ACHN (cell line): ENCODE measurements at regions of chr6 and their contacts with region 1.

Region 1: DNA sequence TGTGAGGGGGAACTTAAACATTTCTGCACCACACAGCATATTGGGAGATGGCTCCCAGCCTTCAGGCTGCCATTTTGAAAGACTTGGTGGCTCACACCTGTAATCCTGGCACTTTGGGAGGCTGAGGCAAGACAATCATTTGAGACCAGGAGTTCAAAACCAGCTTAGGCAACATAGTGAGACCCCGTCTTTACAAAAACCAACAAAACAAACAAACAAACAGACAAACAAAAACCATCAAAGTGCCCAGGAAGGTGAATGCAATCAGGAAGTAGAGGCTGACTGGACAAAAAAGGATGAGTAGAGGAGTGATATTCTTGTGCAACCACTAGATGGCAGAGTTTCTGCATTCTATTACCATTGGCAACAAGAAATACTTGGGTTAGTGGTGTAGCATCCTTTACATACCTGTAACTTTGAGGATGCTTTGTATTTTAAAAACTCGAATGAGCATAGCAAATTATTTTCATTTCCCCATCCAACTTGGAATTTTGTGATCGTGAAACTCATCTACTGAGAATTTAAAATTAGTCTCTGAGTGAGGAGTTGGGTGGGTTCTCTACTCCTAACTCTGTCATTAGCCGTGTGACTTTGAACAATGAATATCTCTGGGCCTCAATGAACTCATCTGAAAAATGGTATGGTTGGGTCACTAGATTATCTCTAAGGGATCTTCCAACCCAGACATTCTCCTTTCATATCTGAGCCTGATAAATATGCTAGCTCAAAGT is 84.4 kb downstream of the CRYBG1 start:
- DNase-seq: peak; percentile 72

Region 2: GRCh38 chr6:106125925-106126435 is 319.0 kb before region 1 on chr6:
- in situ Hi-C with region 1: no loop called
- DNase-seq: no peak

Region 3: DNA sequence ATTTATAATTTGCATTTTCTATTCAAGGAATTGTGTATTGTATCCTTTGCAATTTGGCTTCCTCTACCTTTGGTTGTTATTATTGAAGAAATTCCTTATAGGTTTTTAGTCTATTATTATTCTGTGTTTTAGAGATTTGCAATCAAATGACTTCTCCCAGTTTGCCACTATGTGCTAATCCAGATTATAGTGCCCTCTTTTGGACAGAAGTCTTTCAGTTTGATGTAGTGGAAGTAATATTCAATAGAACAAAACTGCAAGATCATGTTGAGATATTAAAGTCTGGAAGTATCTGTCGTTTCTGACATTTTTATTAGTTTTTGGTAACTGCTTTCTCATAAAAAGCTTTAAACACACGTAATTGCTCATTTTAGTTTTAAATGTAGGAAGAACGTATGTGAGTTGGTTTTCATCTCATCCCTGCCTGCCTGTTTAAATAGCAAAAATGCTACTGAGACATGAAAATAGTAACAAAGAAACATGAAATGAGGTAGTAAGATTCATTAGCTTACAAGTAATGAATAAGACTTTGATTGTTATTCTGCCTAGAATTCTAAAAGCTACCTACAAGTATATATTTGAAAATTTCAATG is 111.5 kb after region 1 on chr6:
- in situ Hi-C with region 1: loop called (anchors 25 kb)
- DNase-seq: peak; percentile 38

Region 4: DNA sequence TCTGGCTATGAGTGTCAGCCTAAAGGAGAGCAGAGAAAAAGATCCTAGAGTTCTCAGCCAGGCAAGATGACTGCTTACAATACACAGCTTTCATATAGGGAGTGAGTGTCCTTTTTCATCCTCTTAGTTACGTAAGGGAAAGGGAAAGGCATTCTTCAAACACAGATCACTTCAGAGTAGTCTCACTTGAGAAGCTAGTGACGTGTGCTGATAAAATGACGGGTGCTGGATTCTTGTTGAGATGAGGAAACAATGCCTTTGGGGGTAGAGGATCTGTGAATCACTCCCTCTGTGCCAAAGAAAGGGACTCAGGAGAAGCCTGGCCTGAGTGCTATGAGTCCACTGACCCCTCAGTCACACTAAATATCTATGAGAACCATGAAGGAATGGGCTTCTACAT is 301.7 kb after region 1 on chr6:
- in situ Hi-C with region 1: no loop called
- DNase-seq: no peak